Motor neuron (in vitro differentiated cells): ENCODE measurements at regions of chr12 and their contacts with region 1.

Region 1: DNA sequence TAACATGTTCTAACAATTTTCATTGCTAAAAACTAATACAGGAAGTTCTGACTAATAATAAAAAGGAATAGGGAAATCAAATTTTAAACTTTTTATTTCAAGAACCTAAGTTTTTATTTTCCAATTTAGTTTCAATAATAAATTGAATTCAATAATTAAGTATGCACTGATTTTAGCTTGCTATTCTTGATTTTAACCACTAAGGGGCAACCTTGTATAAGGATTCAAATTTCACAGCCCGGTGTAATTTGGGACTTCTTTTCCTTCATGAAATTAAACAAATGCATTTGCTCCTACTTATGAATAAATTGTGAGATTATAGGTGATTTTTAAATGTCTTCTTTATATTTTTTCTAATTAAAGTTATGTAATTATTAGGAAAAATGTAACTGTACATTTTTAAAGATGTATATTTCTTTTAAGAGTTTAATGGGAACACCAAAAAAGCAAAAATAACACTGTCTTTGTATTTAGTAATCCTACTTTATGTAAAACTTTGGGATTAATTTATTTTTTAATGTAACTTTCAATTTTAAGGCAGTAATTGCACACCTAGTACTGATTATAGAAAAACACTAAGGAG is 241.4 kb upstream of the PDZRN4 start:
- ATAC-seq: no peak
- H3K4me3 ChIP-seq: no peak overlapping the region
- H3K27ac ChIP-seq: no peak overlapping the region
- H3K4me1 ChIP-seq: no peaks in the 10 kb centered on the region

Region 2: GRCh38 chr12:40325349-40325960 is 621.2 kb before region 1 on chr12:
- in situ Hi-C with region 1: loop called in 1 of 9 experiments (anchors 25 kb)
- ATAC-seq: peak in 4 of 8 experiments; percentile 27 to 86 (median 81)
- H3K4me3 ChIP-seq: no peak overlapping the region
- H3K27ac ChIP-seq: no peak overlapping the region
- H3K4me1 ChIP-seq: no peaks in the 10 kb centered on the region